ENCODE measurements at regions of chr1 and their contacts with region 1.

Region 1: GRCh38 chr1:235423191-235423652 is 56.0 kb downstream of the TBCE start:
- DNase-seq: no peak
- H3K4me3 ChIP-seq: no peak overlapping the region
- H3K27ac ChIP-seq: no peak overlapping the region
- H3K4me1 ChIP-seq: peaks cover 0 to 6% (median 0%) of the 10 kb centered on the region in 4 donors
- H3K27me3 ChIP-seq: no peaks in the 10 kb centered on the region
- CTCF ChIP-seq: no peak

Region 2: GRCh38 chr1:234478481-234479309 is 944.5 kb before region 1 on chr1 and contains the start of gene TARBP1:
- intact Hi-C with region 1: loop called (anchors 10 kb)
- DNase-seq: peak; percentile 33 to 75
- H3K4me3 ChIP-seq: peak within 1 kb of the TSS; percentile 64 to 66
- H3K27ac ChIP-seq: peak within 1 kb of the TSS; percentile 4 to 74
- H3K4me1 ChIP-seq: peaks cover 0 to 6% (median 3%) of the 10 kb centered on the region in 4 donors
- H3K27me3 ChIP-seq: peaks cover 0 to 2% of the 10 kb centered on the region in 2 donors
- CTCF ChIP-seq: no peak

Region 3: GRCh38 chr1:235304549-235305451 is 118.4 kb before region 1 on chr1:
- intact Hi-C with region 1: no loop called
- DNase-seq: no peak
- H3K4me3 ChIP-seq: no peak overlapping the region
- H3K27ac ChIP-seq: no peak overlapping the region
- H3K4me1 ChIP-seq: peaks cover 0 to 52% (median 6%) of the 10 kb centered on the region in 4 donors
- H3K27me3 ChIP-seq: no peaks in the 10 kb centered on the region
- CTCF ChIP-seq: no peak